ENCODE measurements at regions of chr12 and their contacts with region 1.

Region 1: GRCh38 chr12:48957141-48958048 is at the start of gene ARF3:
- H3K4me3 ChIP-seq: peak within 1 kb of the TSS; percentile 81
- H3K27ac ChIP-seq: peak within 1 kb of the TSS; percentile 90
- H3K4me1 ChIP-seq: no peaks in the 10 kb centered on the region
- CTCF ChIP-seq: no peak; the same call in none of the 2 replicates

Region 2: GRCh38 chr12:48508991-48509390 is 448.4 kb before region 1 on chr12:
- CTCF ChIA-PET with region 1: no interaction called
- POLR2A ChIA-PET with region 1: no interaction called
- H3K4me3 ChIP-seq: no peak overlapping the region
- H3K27ac ChIP-seq: no peak overlapping the region
- H3K4me1 ChIP-seq: no peaks in the 10 kb centered on the region
- CTCF ChIP-seq: no peak

Region 3: GRCh38 chr12:48936379-48936979 is 20.9 kb before region 1 on chr12:
- CTCF ChIA-PET with region 1: interaction called, 64 read pairs
- POLR2A ChIA-PET with region 1: interaction called, 3 read pairs
- H3K4me3 ChIP-seq: no peak overlapping the region
- H3K27ac ChIP-seq: no peak overlapping the region
- H3K4me1 ChIP-seq: no peaks in the 10 kb centered on the region
- CTCF ChIP-seq: peak; percentile 67

Region 4: DNA sequence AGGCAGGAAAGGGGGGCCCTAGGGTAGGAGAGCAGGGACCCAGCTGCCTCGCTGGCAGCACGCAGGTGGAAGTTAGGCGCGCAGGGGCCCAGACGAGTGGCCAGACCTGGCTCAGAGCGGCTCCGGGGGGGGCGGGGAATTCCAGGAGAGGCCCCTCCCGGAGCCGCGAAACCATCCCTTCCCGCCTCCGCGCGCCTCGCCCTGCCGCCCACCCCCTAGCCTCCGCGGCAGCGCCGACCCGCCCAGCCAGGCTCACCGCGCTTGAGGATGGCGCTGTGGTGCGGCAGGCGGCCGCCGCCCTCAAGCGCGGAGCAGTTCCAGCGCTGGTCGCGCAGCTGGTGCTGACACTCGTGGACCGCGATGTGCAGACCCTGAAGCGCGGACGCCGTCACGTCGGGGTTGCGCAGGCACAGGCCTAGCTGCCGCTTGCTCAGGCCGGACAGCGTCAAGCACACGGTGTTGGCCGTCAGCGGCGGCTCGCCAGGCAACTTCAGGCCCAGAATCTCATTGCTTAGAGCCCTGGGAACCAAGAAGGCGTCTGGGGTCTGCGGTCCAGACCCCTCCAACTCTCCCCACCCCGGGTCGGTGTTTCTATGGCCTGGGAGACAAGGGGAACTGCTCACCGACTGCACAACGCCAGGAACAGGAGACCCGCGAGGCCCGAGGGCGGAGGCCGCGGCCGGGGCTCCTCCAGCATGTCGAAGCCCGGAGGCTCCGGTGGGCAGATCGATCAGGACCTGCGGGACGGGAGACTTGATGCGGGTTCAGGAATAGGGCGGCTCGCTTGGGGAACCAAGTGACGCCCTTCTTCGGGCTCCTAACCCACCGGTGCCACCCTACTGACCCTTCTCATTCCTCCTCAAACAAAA is 12.7 kb after region 1 on chr12:
- CTCF ChIA-PET with region 1: interaction called, 4 read pairs
- POLR2A ChIA-PET with region 1: interaction called, 21 read pairs
- H3K4me3 ChIP-seq: no peak overlapping the region
- H3K27ac ChIP-seq: no peak overlapping the region
- H3K4me1 ChIP-seq: peaks cover 9% of the 10 kb centered on the region
- CTCF ChIP-seq: no peak

Measured in HEK293 (cell line).